Naive thymus-derived CD4-positive, alpha-beta T cell (primary cell): ENCODE measurements at regions of chr10 and their contacts with region 1.

Region 1: DNA sequence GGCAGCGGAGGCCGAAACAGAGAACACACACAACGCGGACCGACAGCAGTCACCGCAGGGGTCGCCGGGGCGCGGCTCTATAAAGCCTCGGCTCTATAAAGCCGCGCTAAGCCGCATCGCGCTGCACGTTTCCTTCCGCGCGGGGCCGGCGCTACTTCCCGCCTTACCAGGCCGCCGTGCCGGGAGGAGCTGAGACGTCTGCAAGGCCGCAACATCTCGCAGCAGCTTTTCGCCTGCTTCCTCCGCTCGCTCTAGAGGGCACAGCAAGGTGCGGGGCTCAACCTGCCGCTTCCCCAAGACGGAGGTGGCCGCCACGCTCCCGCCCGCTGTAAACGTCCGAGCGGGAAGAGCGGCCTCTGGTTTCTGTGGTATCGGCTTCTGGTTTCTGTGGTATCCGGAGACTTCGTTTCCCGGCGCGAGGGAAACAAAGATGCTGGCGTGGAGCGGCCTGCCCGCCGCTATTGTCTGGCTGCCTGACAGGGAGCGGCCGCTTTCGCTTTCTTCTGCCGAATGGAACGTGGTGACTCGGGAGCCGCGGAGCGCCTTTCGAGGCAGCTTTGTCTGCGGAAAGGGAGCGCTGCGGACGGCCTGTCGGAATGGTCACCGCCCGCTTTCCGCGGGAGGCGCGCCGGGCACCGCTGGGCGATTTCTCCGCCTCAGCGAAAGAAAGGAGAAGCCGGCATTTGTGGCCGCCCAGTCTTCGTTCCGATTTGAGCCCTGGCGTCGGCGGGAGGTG is 91.8 kb downstream of the SPAG6 start:
- DNase-seq: peak; percentile 79 to 93 (median 89)
- ATAC-seq: peak; percentile 91
- H3K4me3 ChIP-seq: peak overlapping the region; percentile 85
- H3K4me3 Mint-ChIP-seq: peak overlapping the region; percentile 90 to 97 (median 96)
- H3K27ac ChIP-seq: peak overlapping the region; percentile 88
- H3K27ac Mint-ChIP-seq: peak overlapping the region; percentile 96 to 98 (median 98)
- H3K4me1 ChIP-seq: peaks cover 10 to 19% of the 10 kb centered on the region in 2 donors
- H3K4me1 Mint-ChIP-seq: peaks cover 12 to 44% (median 35%) of the 10 kb centered on the region in 7 donors
- H3K27me3 ChIP-seq: no peaks in the 10 kb centered on the region
- H3K27me3 Mint-ChIP-seq: peaks cover 0 to 22% (median 0%) of the 10 kb centered on the region in 5 donors

Region 2: GRCh38 chr10:21495752-21496342 is 941.2 kb before region 1 on chr10:
- CTCF ChIA-PET with region 1: no interaction called
- POLR2A ChIA-PET with region 1: no interaction called
- intact Hi-C with region 1: loop called (anchors 1 to 10 kb)
- DNase-seq: peak; percentile 74 to 97 (median 89)
- ATAC-seq: peak; percentile 94
- H3K4me3 ChIP-seq: peak overlapping the region; percentile 79
- H3K4me3 Mint-ChIP-seq: peak overlapping the region; percentile 86 to 95 (median 90)
- H3K27ac ChIP-seq: no peak overlapping the region
- H3K27ac Mint-ChIP-seq: peak overlapping the region in 6 of 9 donors; percentile 47 to 76 (median 55)
- H3K4me1 ChIP-seq: peaks cover 20% of the 10 kb centered on the region in 2 donors
- H3K4me1 Mint-ChIP-seq: peaks cover 19 to 38% (median 25%) of the 10 kb centered on the region in 7 donors
- H3K27me3 ChIP-seq: peaks cover 0 to 32% of the 10 kb centered on the region in 2 donors
- H3K27me3 Mint-ChIP-seq: peaks cover 47 to 81% (median 52%) of the 10 kb centered on the region in 5 donors

Region 3: GRCh38 chr10:22022257-22023032 is 414.6 kb before region 1 on chr10:
- CTCF ChIA-PET with region 1: no interaction called
- POLR2A ChIA-PET with region 1: interaction called, 4 read pairs
- intact Hi-C with region 1: loop called in 1 of 2 experiments (anchors 5 kb)
- DNase-seq: peak in 8 of 9 donors; percentile 27 to 71 (median 63)
- ATAC-seq: peak; percentile 93
- H3K4me3 ChIP-seq: peak overlapping the region; percentile 46
- H3K4me3 Mint-ChIP-seq: peak overlapping the region; percentile 28 to 89 (median 84)
- H3K27ac ChIP-seq: peak overlapping the region; percentile 75
- H3K27ac Mint-ChIP-seq: peak overlapping the region; percentile 85 to 99 (median 94)
- H3K4me1 ChIP-seq: peaks cover 4 to 19% of the 10 kb centered on the region in 2 donors
- H3K4me1 Mint-ChIP-seq: peaks cover 14 to 31% (median 21%) of the 10 kb centered on the region in 7 donors
- H3K27me3 ChIP-seq: no peaks in the 10 kb centered on the region
- H3K27me3 Mint-ChIP-seq: peaks cover 0 to 8% (median 0%) of the 10 kb centered on the region in 5 donors

Region 4: GRCh38 chr10:22325272-22326144 is 111.5 kb before region 1 on chr10:
- CTCF ChIA-PET with region 1: no interaction called
- POLR2A ChIA-PET with region 1: interaction called, 13 read pairs
- intact Hi-C with region 1: loop called in 1 of 2 experiments (anchors 1 kb)
- DNase-seq: peak; percentile 64 to 85 (median 80)
- ATAC-seq: peak; percentile 59
- H3K4me3 ChIP-seq: peak overlapping the region; percentile 44
- H3K4me3 Mint-ChIP-seq: peak overlapping the region; percentile 80 to 94 (median 88)
- H3K27ac ChIP-seq: peak overlapping the region; percentile 72
- H3K27ac Mint-ChIP-seq: peak overlapping the region; percentile 73 to 95 (median 93)
- H3K4me1 ChIP-seq: peaks cover 6 to 17% of the 10 kb centered on the region in 2 donors
- H3K4me1 Mint-ChIP-seq: peaks cover 17 to 43% (median 38%) of the 10 kb centered on the region in 7 donors
- H3K27me3 ChIP-seq: peaks cover 0 to 5% of the 10 kb centered on the region in 2 donors
- H3K27me3 Mint-ChIP-seq: peaks cover 6 to 50% (median 36%) of the 10 kb centered on the region in 5 donors

Region 5: DNA sequence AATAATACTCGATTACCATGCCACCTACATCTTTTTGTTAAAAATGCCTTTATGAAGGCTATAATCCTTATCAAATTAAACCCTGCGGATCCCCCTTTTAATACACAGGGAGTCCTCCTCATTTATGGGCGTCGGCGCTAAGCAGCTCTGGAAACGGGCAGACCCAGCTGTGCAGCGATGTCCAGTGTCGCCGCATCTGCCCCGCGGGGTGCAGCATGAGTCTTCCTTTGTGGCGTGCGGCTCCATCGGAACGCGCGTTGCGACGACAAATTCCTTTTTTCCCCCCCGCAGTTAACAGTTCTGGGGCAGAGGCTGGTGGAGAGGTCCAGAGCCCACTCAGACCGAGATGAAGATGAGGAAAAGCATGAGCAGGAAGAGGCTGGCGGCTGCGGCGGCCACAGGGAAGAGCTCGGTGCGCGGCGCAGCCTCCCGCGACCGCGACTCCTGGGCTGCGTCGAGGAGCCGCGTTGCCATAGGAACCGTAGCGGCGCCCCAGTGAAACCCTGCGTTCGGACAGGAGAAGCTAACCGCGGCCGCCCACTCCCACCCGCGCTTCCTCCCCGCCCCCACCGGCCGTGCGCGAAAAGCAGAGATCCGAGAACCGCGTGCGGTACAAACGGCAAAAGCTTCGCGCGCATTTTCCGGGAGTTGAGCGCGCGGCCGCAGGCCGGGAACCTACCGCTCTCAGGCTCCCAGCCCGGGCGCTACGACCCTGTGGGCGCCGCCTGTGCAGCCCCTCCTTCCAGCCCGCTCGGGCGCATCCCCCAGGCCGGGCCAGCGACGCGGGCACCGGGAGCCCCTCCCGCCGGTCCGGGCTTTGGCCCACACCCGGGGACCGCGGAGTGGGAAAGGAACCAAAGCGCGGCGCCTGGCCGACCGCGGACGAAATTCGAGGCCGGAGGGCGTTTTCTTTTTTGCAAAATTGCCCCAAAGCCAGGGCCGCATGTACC is 38.9 kb after region 1 on chr10:
- CTCF ChIA-PET with region 1: no interaction called
- POLR2A ChIA-PET with region 1: interaction called, 4 read pairs
- intact Hi-C with region 1: loop called (anchors 2 kb)
- DNase-seq: peak in 5 of 9 donors; percentile 2 to 65 (median 8)
- ATAC-seq: no peak
- H3K4me3 ChIP-seq: peak overlapping the region; percentile 12
- H3K4me3 Mint-ChIP-seq: peak overlapping the region; percentile 82 to 95 (median 88)
- H3K27ac ChIP-seq: no peak overlapping the region
- H3K27ac Mint-ChIP-seq: peak overlapping the region in 2 of 9 donors; percentile 15 to 80
- H3K4me1 ChIP-seq: peaks cover 6 to 7% of the 10 kb centered on the region in 2 donors
- H3K4me1 Mint-ChIP-seq: peaks cover 5 to 25% (median 17%) of the 10 kb centered on the region in 7 donors
- H3K27me3 ChIP-seq: peaks cover 26 to 29% of the 10 kb centered on the region in 2 donors
- H3K27me3 Mint-ChIP-seq: peaks cover 58 to 70% (median 66%) of the 10 kb centered on the region in 5 donors

Region 6: GRCh38 chr10:22655311-22655981 is 218.4 kb after region 1 on chr10:
- CTCF ChIA-PET with region 1: no interaction called
- POLR2A ChIA-PET with region 1: no interaction called
- intact Hi-C with region 1: loop called in 1 of 2 experiments (anchors 5 kb)
- DNase-seq: peak in 7 of 9 donors; percentile 69 to 90 (median 86)
- ATAC-seq: peak; percentile 89
- H3K4me3 ChIP-seq: peak overlapping the region; percentile 23
- H3K4me3 Mint-ChIP-seq: peak overlapping the region; percentile 67 to 87 (median 81)
- H3K27ac ChIP-seq: peak overlapping the region; percentile 54
- H3K27ac Mint-ChIP-seq: peak overlapping the region; percentile 82 to 97 (median 92)
- H3K4me1 ChIP-seq: peaks cover 84 to 88% of the 10 kb centered on the region in 2 donors
- H3K4me1 Mint-ChIP-seq: peaks cover 84 to 100% (median 90%) of the 10 kb centered on the region in 7 donors
- H3K27me3 ChIP-seq: no peaks in the 10 kb centered on the region
- H3K27me3 Mint-ChIP-seq: no peaks in the 10 kb centered on the region

Region 7: GRCh38 chr10:23438550-23439441 is 1001.7 kb after region 1 on chr10 and contains the start of gene OTUD1:
- CTCF ChIA-PET with region 1: no interaction called
- POLR2A ChIA-PET with region 1: interaction called, 3 read pairs
- intact Hi-C with region 1: loop called (anchors 1 to 10 kb)
- DNase-seq: peak; percentile 89 to 99 (median 95)
- ATAC-seq: peak; percentile 96
- H3K4me3 ChIP-seq: peak within 1 kb of the TSS; percentile 96
- H3K4me3 Mint-ChIP-seq: peak within 1 kb of the TSS; percentile 81 to 99 (median 90)
- H3K27ac ChIP-seq: peak within 1 kb of the TSS; percentile 92
- H3K27ac Mint-ChIP-seq: peak within 1 kb of the TSS; percentile 89 to 96 (median 94)
- H3K4me1 ChIP-seq: peaks cover 27 to 29% of the 10 kb centered on the region in 2 donors
- H3K4me1 Mint-ChIP-seq: peaks cover 28 to 44% (median 39%) of the 10 kb centered on the region in 7 donors
- H3K27me3 ChIP-seq: no peaks in the 10 kb centered on the region
- H3K27me3 Mint-ChIP-seq: peaks cover 0 to 8% (median 0%) of the 10 kb centered on the region in 5 donors
- total RNA-seq, gene OTUD1: 20.7 to 118 (median 44.5) TPM